Caco-2 (cell line): ENCODE measurements at regions of chr6 and their contacts with region 1.

Region 1: DNA sequence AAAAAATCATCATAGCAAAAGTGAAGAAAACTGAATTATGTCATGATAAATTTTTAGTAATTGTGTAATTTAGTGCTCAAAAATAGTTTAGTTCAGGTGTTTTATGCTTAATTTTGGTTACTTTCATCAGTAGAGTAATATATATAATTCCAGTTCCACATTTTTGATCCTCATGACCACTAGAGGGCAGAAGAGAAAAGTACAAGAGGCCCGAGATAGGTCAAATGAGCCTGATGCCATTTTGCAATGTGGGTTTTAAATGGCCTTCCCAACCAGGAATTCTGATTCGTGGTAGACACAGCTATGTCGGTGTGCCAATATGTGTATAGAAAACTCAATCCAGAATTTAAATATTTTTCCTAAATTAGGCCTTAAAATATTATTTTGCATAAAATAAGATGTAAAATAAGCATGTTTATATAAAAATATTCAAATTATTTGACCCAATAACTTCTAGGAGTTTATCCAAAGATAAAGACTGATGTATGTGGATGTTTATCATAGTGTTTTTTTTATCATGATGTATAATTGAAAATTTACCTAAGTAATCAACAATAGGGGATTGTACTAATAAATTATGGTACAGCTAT is 159.7 kb upstream of the RPS6KA2 start:
- DNase-seq: peak in 1 of 2 experiments; percentile 65
- H3K4me3 ChIP-seq: no peak overlapping the region
- H3K4me3 Mint-ChIP-seq: no peak overlapping the region
- H3K27ac Mint-ChIP-seq: no peak overlapping the region
- H3K4me1 ChIP-seq: no peaks in the 10 kb centered on the region
- H3K4me1 Mint-ChIP-seq: no peaks in the 10 kb centered on the region
- H3K27me3 ChIP-seq: no peaks in the 10 kb centered on the region
- H3K27me3 Mint-ChIP-seq: peaks cover 8% of the 10 kb centered on the region
- CTCF ChIP-seq: peak; percentile 59 to 67

Region 2: DNA sequence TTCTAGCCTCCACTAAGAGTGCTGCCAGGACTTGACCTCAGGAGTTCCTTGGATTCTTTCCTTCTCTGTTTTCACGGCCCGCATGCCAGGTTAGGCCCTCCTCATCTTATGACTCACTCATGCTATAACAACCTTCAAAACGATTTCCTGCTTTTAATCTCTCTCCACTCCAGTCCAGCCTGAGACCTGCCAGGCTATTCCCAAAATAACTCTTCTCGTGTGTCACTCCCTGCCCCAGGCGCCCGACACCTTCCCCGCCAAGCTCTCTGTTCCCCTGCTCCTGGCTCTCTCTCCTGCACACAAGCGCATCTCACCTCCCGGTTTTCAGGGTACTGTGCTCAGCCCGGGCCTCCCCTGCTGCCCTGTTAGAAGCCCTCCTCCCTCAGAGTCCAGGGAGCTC is 95.6 kb before region 1 on chr6:
- CTCF ChIA-PET with region 1: no interaction called
- POLR2A ChIA-PET with region 1: no interaction called
- intact Hi-C with region 1: no loop called
- DNase-seq: no peak
- H3K4me3 ChIP-seq: no peak overlapping the region
- H3K4me3 Mint-ChIP-seq: no peak overlapping the region
- H3K27ac Mint-ChIP-seq: no peak overlapping the region
- H3K4me1 ChIP-seq: no peaks in the 10 kb centered on the region
- H3K4me1 Mint-ChIP-seq: no peaks in the 10 kb centered on the region
- H3K27me3 ChIP-seq: no peaks in the 10 kb centered on the region
- H3K27me3 Mint-ChIP-seq: peaks cover 3% of the 10 kb centered on the region
- CTCF ChIP-seq: no peak

Region 3: GRCh38 chr6:166728957-166729441 is 57.8 kb before region 1 on chr6:
- CTCF ChIA-PET with region 1: no interaction called
- POLR2A ChIA-PET with region 1: interaction called, 12 read pairs
- intact Hi-C with region 1: no loop called
- DNase-seq: no peak
- H3K4me3 ChIP-seq: no peak overlapping the region
- H3K4me3 Mint-ChIP-seq: no peak overlapping the region
- H3K27ac Mint-ChIP-seq: no peak overlapping the region
- H3K4me1 ChIP-seq: no peaks in the 10 kb centered on the region
- H3K4me1 Mint-ChIP-seq: no peaks in the 10 kb centered on the region
- H3K27me3 ChIP-seq: no peaks in the 10 kb centered on the region
- H3K27me3 Mint-ChIP-seq: peaks cover 11% of the 10 kb centered on the region
- CTCF ChIP-seq: no peak

Region 4: GRCh38 chr6:166862287-166862977 is 75.6 kb after region 1 on chr6:
- CTCF ChIA-PET with region 1: no interaction called
- POLR2A ChIA-PET with region 1: no interaction called
- intact Hi-C with region 1: loop called (anchors 10 kb)
- DNase-seq: peak; percentile 48 to 57
- H3K4me3 ChIP-seq: peak overlapping the region; percentile 40
- H3K4me3 Mint-ChIP-seq: peak overlapping the region; percentile 85
- H3K27ac Mint-ChIP-seq: no peak overlapping the region
- H3K4me1 ChIP-seq: no peaks in the 10 kb centered on the region
- H3K4me1 Mint-ChIP-seq: no peaks in the 10 kb centered on the region
- H3K27me3 ChIP-seq: no peaks in the 10 kb centered on the region
- H3K27me3 Mint-ChIP-seq: peaks cover 20% of the 10 kb centered on the region
- CTCF ChIP-seq: peak in 1 of 2 experiments; percentile 28

Region 5: DNA sequence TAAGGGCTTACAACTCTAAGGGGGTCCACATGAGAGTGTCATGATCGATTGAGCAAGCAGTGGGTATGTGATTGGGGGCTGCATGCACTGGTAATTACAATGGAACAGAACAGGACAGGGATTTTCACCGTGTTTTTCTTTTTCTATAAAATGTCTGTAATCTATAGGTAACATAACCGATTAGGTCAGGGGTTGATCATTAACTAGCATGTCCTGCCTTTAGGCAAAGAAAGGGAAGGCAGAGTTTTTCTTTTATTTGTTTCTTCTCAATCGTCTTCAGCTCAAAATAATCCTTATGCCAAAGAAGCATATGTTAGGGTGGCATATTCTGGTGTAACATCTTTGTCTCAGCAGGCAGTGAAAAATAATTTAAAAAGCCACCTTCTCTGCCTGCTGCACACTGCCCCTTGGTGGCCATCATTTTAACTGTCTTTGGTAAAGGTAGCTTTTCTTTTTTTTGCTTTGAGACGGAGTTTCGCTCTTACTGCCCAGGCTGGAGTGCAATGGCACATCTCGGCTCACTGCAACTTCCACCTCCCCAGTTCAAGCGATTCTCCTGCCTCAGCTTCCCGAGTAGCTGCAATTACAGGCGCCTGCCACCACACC is 202.7 kb after region 1 on chr6:
- CTCF ChIA-PET with region 1: interaction called, 8 read pairs
- POLR2A ChIA-PET with region 1: no interaction called
- intact Hi-C with region 1: loop called (anchors 1 kb)
- DNase-seq: no peak
- H3K4me3 ChIP-seq: no peak overlapping the region
- H3K4me3 Mint-ChIP-seq: no peak overlapping the region
- H3K27ac Mint-ChIP-seq: no peak overlapping the region
- H3K4me1 ChIP-seq: no peaks in the 10 kb centered on the region
- H3K4me1 Mint-ChIP-seq: no peaks in the 10 kb centered on the region
- H3K27me3 ChIP-seq: no peaks in the 10 kb centered on the region
- H3K27me3 Mint-ChIP-seq: no peaks in the 10 kb centered on the region
- CTCF ChIP-seq: peak; percentile 24 to 47